Spleen (tissue), 13 donors: ENCODE measurements at regions of chr3 and their contacts with region 1.

Region 1: GRCh38 chr3:46368569-46368968 is 2.2 kb upstream of the CCR5 start:
- DNase-seq: peak; percentile 93
- H3K4me3 ChIP-seq: no peak overlapping the region
- H3K27ac ChIP-seq: peak overlapping the region in 5 of 8 donors; percentile 53 to 81 (median 66)
- H3K4me1 ChIP-seq: peaks cover 0 to 59% (median 22%) of the 10 kb centered on the region in 6 donors
- H3K27me3 ChIP-seq: no peaks in the 10 kb centered on the region
- CTCF ChIP-seq: peak in 10 of 11 experiments; percentile 26 to 74 (median 64)
- POLR2A ChIP-seq: no peak

Region 2: GRCh38 chr3:45938864-45939263 is 429.7 kb before region 1 on chr3:
- intact Hi-C with region 1: loop called (anchors 5 kb)
- DNase-seq: peak; percentile 90
- H3K4me3 ChIP-seq: no peak overlapping the region
- H3K27ac ChIP-seq: peak overlapping the region in 4 of 8 donors; percentile 25 to 65 (median 47)
- H3K4me1 ChIP-seq: peaks cover 0 to 35% (median 15%) of the 10 kb centered on the region in 6 donors
- H3K27me3 ChIP-seq: no peaks in the 10 kb centered on the region
- CTCF ChIP-seq: peak; percentile 81 to 95 (median 90)
- POLR2A ChIP-seq: no peak

Region 3: GRCh38 chr3:46276502-46277099 is 92.0 kb before region 1 on chr3:
- intact Hi-C with region 1: loop called (anchors 5 kb)
- DNase-seq: peak; percentile 92
- H3K4me3 ChIP-seq: no peak overlapping the region
- H3K27ac ChIP-seq: peak overlapping the region in 3 of 8 donors; percentile 18 to 48 (median 23)
- H3K4me1 ChIP-seq: peaks cover 7 to 29% (median 18%) of the 10 kb centered on the region in 6 donors
- H3K27me3 ChIP-seq: no peaks in the 10 kb centered on the region
- CTCF ChIP-seq: peak; percentile 76 to 91 (median 88)
- POLR2A ChIP-seq: no peak

Region 4: DNA sequence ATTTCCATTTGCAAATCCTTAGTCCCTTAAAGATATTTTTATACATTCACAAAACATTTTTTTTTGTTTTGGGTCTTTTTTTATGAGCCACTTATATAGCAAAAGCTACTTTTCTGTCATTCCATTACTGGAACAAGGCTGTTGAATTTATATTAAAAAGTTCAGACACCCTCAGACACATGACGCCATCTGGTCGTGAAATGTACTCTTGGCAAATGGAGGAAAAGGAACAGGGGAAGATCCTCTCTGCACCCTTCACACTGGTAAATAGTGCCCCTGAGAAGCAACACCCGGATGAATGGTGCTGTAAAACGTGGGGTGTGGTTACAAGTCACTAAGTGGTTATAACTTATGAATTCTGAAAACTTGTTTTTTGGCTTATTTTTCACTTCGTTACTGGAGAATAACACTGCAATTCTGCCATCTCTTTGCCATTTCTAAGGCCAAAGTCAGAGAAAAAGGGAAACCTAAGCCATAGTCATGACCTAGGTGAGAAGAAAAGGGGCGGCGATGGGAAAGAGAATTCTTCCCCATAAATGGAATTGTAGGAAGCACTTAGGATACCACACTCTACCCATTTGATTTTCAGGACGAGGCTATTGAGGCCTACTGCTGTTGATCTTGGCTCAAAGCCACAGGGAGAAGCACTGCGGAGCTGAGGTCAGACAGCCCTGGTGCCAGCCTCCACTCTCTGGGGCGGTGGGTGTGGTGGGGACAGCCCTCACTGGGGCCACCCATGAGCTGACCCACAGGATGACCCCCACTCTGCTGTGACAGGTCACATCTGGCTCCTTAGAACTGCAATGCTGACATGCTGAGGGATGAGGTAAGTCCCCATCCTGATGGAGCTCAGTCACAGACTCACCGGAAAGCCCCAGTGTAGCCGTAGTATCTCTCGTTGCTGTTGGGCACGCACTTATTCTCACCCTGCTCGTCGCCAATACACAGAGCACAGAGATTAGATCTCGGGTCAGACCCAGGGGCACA is 74.3 kb after region 1 on chr3:
- intact Hi-C with region 1: no loop called
- DNase-seq: no peak
- H3K4me3 ChIP-seq: no peak overlapping the region
- H3K27ac ChIP-seq: peak overlapping the region in 2 of 8 donors; percentile 14 to 36
- H3K4me1 ChIP-seq: peaks cover 0 to 39% (median 20%) of the 10 kb centered on the region in 6 donors
- H3K27me3 ChIP-seq: no peaks in the 10 kb centered on the region
- CTCF ChIP-seq: peak in 7 of 11 experiments; percentile 38 to 88 (median 64)
- POLR2A ChIP-seq: no peak

Region 5: GRCh38 chr3:46759239-46760167 is 390.9 kb after region 1 on chr3:
- intact Hi-C with region 1: no loop called
- DNase-seq: no peak
- H3K4me3 ChIP-seq: no peak overlapping the region
- H3K27ac ChIP-seq: no peak overlapping the region
- H3K4me1 ChIP-seq: no peaks in the 10 kb centered on the region
- H3K27me3 ChIP-seq: peaks cover 0 to 7% (median 0%) of the 10 kb centered on the region in 7 donors
- CTCF ChIP-seq: no peak
- POLR2A ChIP-seq: no peak